Upper lobe of right lung (tissue), 1 donor: ENCODE measurements at regions of chr1 and their contacts with region 1.

Region 1: GRCh38 chr1:205977402-205978014 is 25.7 kb downstream of the RAB7B start:
- DNase-seq: peak; percentile 84
- ATAC-seq: peak; percentile 85
- H3K4me3 ChIP-seq: no peak overlapping the region
- H3K27ac ChIP-seq: no peak overlapping the region
- H3K4me1 ChIP-seq: peaks cover 10% of the 10 kb centered on the region
- H3K27me3 ChIP-seq: no peaks in the 10 kb centered on the region
- CTCF ChIP-seq: peak; percentile 98

Region 2: DNA sequence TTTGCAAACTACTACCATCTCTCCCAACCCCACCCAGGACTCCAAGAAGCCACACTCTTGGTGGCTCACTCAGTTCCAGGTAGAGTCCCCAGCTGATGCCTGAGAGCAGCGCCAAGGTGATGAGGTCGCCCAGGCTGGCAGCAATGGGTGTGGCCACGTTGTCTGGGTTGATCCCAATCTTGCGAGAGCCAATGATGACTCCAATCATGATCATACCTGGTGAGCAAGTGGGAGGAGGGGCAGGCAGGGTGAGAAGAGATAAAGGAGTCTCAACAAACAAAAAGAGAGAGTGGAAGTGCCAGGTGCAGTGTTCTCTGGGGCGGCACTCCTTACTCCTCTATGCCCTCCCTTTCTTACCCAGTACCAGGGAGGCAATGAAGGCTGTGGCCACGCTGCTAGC is 178.9 kb before region 1 on chr1:
- intact Hi-C with region 1: loop called (anchors 5 kb)
- DNase-seq: no peak
- ATAC-seq: no peak
- H3K4me3 ChIP-seq: no peak overlapping the region
- H3K27ac ChIP-seq: no peak overlapping the region
- H3K4me1 ChIP-seq: no peaks in the 10 kb centered on the region
- H3K27me3 ChIP-seq: no peaks in the 10 kb centered on the region
- CTCF ChIP-seq: no peak

Region 3: DNA sequence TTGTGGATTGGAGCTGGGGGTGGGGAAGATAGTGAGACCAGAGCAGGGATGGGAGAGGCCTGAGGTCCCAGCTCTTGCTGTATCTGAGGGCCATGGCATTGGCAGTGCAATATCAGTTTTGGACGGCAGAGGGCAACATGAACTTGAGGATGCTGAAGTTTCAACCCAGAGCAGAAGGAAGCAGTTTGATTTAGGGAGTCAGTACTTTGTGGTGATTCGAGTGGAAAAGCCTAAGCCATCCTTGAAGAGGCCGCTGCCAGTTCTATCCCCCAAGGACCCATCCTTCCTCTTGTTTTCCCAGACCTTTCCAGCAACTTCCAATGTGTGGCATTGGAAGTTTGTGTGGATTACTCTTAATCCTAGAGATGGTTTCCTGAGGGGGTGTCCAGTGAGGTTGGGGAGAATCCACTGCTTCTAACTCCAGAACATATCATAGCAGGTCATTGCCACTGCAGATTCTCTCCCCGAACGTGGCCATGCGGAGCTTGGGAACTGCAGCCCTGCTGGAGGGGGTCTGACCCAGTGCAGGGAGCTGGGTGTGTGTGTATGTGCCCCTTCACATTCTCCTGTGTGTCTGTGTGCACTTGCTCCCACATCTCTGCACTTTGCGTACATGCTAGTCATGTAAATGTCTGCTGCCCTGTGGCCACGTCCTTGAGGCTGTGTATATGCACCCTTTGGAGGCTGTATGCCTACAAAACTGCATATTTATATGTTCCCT is 58.3 kb before region 1 on chr1:
- intact Hi-C with region 1: loop called (anchors 5 kb)
- DNase-seq: no peak
- ATAC-seq: peak; percentile 84
- H3K4me3 ChIP-seq: no peak overlapping the region
- H3K27ac ChIP-seq: peak overlapping the region; percentile 68
- H3K4me1 ChIP-seq: peaks cover 26% of the 10 kb centered on the region
- H3K27me3 ChIP-seq: no peaks in the 10 kb centered on the region
- CTCF ChIP-seq: peak; percentile 95